Activated CD4-positive, alpha-beta memory T cell treated with anti-CD3 and anti-CD28 coated beads for 36 hours (primary cell): ENCODE measurements at regions of chr19 and their contacts with region 1.

Region 1: GRCh38 chr19:36214386-36215275 is at the starts of genes ZNF146 and ZNF565:
- DNase-seq: peak; percentile 98
- H3K4me3 Mint-ChIP-seq: no peak within 1 kb of the TSS
- H3K27ac Mint-ChIP-seq: no peak within 1 kb of the TSS
- H3K4me1 Mint-ChIP-seq: peaks cover 22% of the 10 kb centered on the region
- H3K27me3 Mint-ChIP-seq: no peaks in the 10 kb centered on the region
- total RNA-seq, gene ZNF146: 82.5 to 86.5 TPM
- total RNA-seq, gene ZNF565: 2.2 to 2.3 TPM

Region 2: GRCh38 chr19:35716801-35717666 is 497.6 kb before region 1 on chr19:
- CTCF ChIA-PET with region 1: no interaction called
- POLR2A ChIA-PET with region 1: no interaction called
- intact Hi-C with region 1: loop called (anchors 10 kb)
- DNase-seq: peak; percentile 97
- H3K4me3 Mint-ChIP-seq: peak overlapping the region; percentile 91
- H3K27ac Mint-ChIP-seq: peak overlapping the region; percentile 99
- H3K4me1 Mint-ChIP-seq: peaks cover 39% of the 10 kb centered on the region
- H3K27me3 Mint-ChIP-seq: peaks cover 1% of the 10 kb centered on the region

Region 3: DNA sequence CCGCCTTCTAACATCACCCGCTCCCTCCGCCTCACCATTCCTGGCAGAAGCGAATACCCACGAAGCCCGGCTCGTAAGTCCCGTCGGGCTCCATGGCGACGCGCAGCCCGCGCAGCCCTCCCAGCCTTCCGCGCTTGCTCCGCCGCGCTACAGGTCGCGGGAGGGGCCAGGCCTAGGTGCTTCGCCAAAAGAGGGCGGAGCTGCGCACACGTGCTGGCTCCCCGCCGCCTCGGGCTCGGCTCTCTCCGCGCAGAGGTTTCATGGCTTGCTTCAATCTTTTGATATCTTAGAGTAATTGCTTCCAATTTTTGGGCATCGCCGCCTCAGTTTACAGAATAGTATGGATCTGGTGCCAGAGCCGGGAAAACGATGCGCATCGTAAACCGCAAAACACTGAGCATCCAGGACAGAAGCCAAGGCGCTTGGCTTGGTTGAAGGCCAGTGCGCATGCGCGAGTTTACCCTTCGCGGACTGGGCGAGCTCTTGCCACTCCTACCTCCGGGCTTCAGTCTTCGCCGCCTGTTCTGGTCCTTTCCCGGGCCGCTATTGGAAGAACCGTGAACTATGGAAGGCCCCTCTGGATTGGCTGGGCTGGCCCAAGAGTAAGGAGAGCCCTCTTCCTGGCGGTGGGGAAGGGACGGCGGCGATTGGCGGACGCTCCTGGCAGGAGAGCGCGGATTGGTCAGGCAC is 99.7 kb before region 1 on chr19 and contains the start of gene POLR2I:
- CTCF ChIA-PET with region 1: interaction called, 4 read pairs
- POLR2A ChIA-PET with region 1: interaction called, 9 read pairs
- intact Hi-C with region 1: loop called (anchors 1 kb)
- DNase-seq: peak; percentile 99
- H3K4me3 Mint-ChIP-seq: peak within 1 kb of the TSS; percentile 99
- H3K27ac Mint-ChIP-seq: peak within 1 kb of the TSS; percentile 94
- H3K4me1 Mint-ChIP-seq: peaks cover 36% of the 10 kb centered on the region
- H3K27me3 Mint-ChIP-seq: peaks cover 5% of the 10 kb centered on the region
- total RNA-seq, gene POLR2I: 84.1 to 84.8 TPM

Region 4: GRCh38 chr19:36152352-36153091 is 62.1 kb before region 1 on chr19 and contains the start of gene COX7A1:
- CTCF ChIA-PET with region 1: no interaction called
- POLR2A ChIA-PET with region 1: no interaction called
- intact Hi-C with region 1: no loop called
- DNase-seq: no peak
- H3K4me3 Mint-ChIP-seq: no peak within 1 kb of the TSS
- H3K27ac Mint-ChIP-seq: no peak within 1 kb of the TSS
- H3K4me1 Mint-ChIP-seq: peaks cover 6% of the 10 kb centered on the region
- H3K27me3 Mint-ChIP-seq: no peaks in the 10 kb centered on the region
- total RNA-seq, gene COX7A1: not detected

Region 5: GRCh38 chr19:36378625-36379509 is 164.2 kb after region 1 on chr19 and contains the start of gene ZFP14:
- CTCF ChIA-PET with region 1: no interaction called
- POLR2A ChIA-PET with region 1: interaction called, 3 read pairs
- intact Hi-C with region 1: loop called (anchors 10 kb)
- DNase-seq: peak; percentile 97
- H3K4me3 Mint-ChIP-seq: peak within 1 kb of the TSS; percentile 91
- H3K27ac Mint-ChIP-seq: peak within 1 kb of the TSS; percentile 86
- H3K4me1 Mint-ChIP-seq: peaks cover 10% of the 10 kb centered on the region
- H3K27me3 Mint-ChIP-seq: no peaks in the 10 kb centered on the region
- total RNA-seq, gene ZFP14: 1.6 to 2.3 TPM

Region 6: DNA sequence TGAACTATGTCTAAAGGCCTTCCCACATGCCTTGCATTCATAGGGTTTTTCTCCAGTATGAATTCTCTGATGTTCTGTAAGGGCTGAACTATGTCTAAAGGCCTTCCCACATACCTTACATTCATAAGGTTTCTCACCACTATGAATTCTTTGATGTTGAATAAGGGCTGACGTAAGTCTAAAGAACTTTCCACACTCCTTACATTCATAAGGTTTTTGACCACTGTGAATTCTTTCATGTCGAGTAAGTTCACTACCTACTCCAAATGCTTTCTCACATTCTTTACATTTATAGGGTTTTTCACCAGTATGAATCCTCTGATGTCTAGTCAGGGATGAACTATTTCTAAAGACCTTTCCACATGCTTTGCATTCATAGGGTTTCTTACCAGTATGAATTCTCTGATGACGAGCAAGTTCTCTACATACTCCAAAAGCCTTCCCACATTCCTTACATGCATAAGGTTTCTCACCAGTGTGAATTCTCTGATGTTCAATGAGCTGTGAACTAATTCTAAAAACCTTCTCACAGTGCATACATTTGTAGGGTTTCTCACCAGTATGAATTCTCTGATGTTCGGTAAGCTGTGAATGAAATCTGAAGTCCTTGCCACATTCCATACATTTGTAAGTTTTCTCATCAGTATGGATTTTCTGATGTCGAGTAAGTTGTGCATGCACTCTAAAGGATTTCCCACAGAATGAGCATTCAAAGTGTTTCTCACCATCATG is 332.5 kb after region 1 on chr19:
- CTCF ChIA-PET with region 1: no interaction called
- POLR2A ChIA-PET with region 1: no interaction called
- intact Hi-C with region 1: no loop called
- DNase-seq: no peak
- H3K4me3 Mint-ChIP-seq: no peak overlapping the region
- H3K27ac Mint-ChIP-seq: no peak overlapping the region
- H3K4me1 Mint-ChIP-seq: no peaks in the 10 kb centered on the region
- H3K27me3 Mint-ChIP-seq: no peaks in the 10 kb centered on the region

Region 7: GRCh38 chr19:36605101-36605876 is 390.7 kb after region 1 on chr19 and contains the start of gene ZNF382:
- CTCF ChIA-PET with region 1: interaction called, 4 read pairs
- POLR2A ChIA-PET with region 1: interaction called, 5 read pairs
- intact Hi-C with region 1: loop called (anchors 2 kb)
- DNase-seq: peak; percentile 90
- H3K4me3 Mint-ChIP-seq: peak within 1 kb of the TSS; percentile 92
- H3K27ac Mint-ChIP-seq: peak within 1 kb of the TSS; percentile 95
- H3K4me1 Mint-ChIP-seq: peaks cover 24% of the 10 kb centered on the region
- H3K27me3 Mint-ChIP-seq: no peaks in the 10 kb centered on the region
- total RNA-seq, gene ZNF382: 10.9 to 14.8 TPM

Region 8: GRCh38 chr19:36915992-36916830 is 701.6 kb after region 1 on chr19 and contains the starts of genes ZNF568 and ZNF829:
- CTCF ChIA-PET with region 1: no interaction called
- POLR2A ChIA-PET with region 1: no interaction called
- intact Hi-C with region 1: loop called (anchors 1 kb)
- DNase-seq: peak; percentile 96
- H3K4me3 Mint-ChIP-seq: peak within 1 kb of the TSS; percentile 92
- H3K27ac Mint-ChIP-seq: peak within 1 kb of the TSS; percentile 94
- H3K4me1 Mint-ChIP-seq: peaks cover 29% of the 10 kb centered on the region
- H3K27me3 Mint-ChIP-seq: no peaks in the 10 kb centered on the region
- total RNA-seq, gene ZNF568: 4.8 to 6.3 TPM
- total RNA-seq, gene ZNF829: 3.8 to 4.3 TPM

Region 9: GRCh38 chr19:37594304-37594981 is 1379.8 kb after region 1 on chr19 and contains the starts of genes ZNF540 and ZNF571:
- CTCF ChIA-PET with region 1: no interaction called
- POLR2A ChIA-PET with region 1: interaction called, 3 read pairs
- intact Hi-C with region 1: loop called (anchors 10 kb)
- DNase-seq: peak; percentile 96
- H3K4me3 Mint-ChIP-seq: peak within 1 kb of the TSS; percentile 86
- H3K27ac Mint-ChIP-seq: peak within 1 kb of the TSS; percentile 100
- H3K4me1 Mint-ChIP-seq: peaks cover 31% of the 10 kb centered on the region
- H3K27me3 Mint-ChIP-seq: no peaks in the 10 kb centered on the region
- total RNA-seq, gene ZNF540: 0.86 to 1.1 TPM
- total RNA-seq, gene ZNF571: 2.7 to 4.0 TPM